Activated CD8-positive, alpha-beta memory T cell treated with anti-CD3 and anti-CD28 coated beads, Interleukin-2, amount 10 ng/mL, durations not matched to agents 7 days and 5 days (primary cell): ENCODE measurements at regions of chr6 and their contacts with region 1.

Region 1: DNA sequence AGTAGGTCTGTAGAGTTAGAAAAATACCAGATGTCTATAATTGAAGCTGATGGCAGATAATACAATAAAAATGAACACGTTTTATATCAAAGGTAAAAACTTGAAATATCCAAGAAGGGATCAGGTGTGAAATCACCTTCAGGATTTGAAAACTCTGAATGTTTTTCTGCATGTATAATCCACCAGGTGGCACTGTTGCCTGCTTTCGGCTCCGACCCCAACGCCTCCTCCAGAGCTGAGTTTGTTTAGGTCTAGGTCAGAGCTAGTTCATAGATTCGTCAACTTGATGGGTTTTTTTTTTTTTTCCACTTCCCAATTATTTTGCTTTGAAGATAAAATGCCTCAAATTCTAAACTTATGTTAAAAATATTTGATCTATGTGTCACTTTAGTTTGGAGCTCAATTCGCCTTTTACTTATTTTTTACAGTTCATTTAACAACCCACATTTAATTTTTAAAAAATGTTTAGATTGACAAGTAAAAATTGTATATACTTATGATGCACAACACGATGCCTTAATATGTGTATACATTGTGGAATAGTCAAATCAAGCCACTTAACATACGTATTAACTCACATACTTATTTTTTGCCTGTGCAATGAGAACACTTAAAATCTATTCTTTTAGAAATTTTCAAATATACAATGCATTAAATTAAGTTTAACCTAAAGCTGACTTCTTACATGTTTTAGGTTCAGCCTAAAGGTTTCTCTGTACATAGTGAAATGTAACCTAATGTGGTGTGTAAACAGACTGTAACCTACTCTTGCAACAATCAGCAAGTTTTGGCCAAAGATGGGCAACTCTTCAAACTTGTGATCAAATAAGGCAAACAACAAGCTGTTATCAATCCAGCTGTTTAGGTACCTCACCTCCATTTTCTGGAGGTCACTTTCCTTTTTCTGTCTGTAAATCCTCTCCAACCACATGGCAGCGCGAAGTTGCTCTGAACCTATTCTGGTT is 39.4 kb upstream of the ENPP4 start:
- DNase-seq: peak; percentile 69
- ATAC-seq: no peak
- H3K4me3 Mint-ChIP-seq: no peak overlapping the region
- H3K27ac Mint-ChIP-seq: no peak overlapping the region
- H3K4me1 Mint-ChIP-seq: peaks cover 2% of the 10 kb centered on the region
- H3K27me3 Mint-ChIP-seq: peaks cover 25% of the 10 kb centered on the region

Region 2: DNA sequence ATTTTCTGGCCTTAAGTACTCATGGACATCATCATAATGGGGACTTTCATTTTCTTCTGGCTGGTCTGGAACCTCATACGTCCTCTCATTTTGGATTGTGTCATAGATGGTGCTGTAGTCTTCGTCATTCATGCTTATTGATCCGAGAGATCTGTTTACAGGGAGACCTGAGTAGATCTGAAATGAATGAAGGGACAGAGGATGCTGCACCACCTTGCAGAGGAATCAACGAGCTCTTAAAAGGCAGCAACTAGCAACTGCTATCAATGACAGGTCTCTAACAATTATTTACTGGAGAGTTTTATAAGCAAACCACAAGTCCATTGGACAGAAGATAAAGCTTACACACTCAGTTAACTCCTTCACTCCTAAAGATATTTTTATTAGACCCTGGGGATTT is 10.3 kb before region 1 on chr6:
- CTCF ChIA-PET with region 1: interaction called, 10 read pairs
- DNase-seq: no peak
- ATAC-seq: no peak
- H3K4me3 Mint-ChIP-seq: no peak overlapping the region
- H3K27ac Mint-ChIP-seq: no peak overlapping the region
- H3K4me1 Mint-ChIP-seq: peaks cover 6% of the 10 kb centered on the region
- H3K27me3 Mint-ChIP-seq: peaks cover 2% of the 10 kb centered on the region

Region 3: GRCh38 chr6:46221222-46221793 is 130.9 kb after region 1 on chr6:
- CTCF ChIA-PET with region 1: interaction called, 32 read pairs
- DNase-seq: no peak
- ATAC-seq: peak; percentile 77
- H3K4me3 Mint-ChIP-seq: no peak overlapping the region
- H3K27ac Mint-ChIP-seq: no peak overlapping the region
- H3K4me1 Mint-ChIP-seq: peaks cover 7% of the 10 kb centered on the region
- H3K27me3 Mint-ChIP-seq: peaks cover 2% of the 10 kb centered on the region

Region 4: GRCh38 chr6:46410334-46410953 is 320.0 kb after region 1 on chr6:
- CTCF ChIA-PET with region 1: interaction called, 33 read pairs
- DNase-seq: no peak
- ATAC-seq: no peak
- H3K4me3 Mint-ChIP-seq: no peak overlapping the region
- H3K27ac Mint-ChIP-seq: no peak overlapping the region
- H3K4me1 Mint-ChIP-seq: peaks cover 3% of the 10 kb centered on the region
- H3K27me3 Mint-ChIP-seq: peaks cover 3% of the 10 kb centered on the region